ENCODE measurements at regions of chr20 and their contacts with region 1.

Region 1: DNA sequence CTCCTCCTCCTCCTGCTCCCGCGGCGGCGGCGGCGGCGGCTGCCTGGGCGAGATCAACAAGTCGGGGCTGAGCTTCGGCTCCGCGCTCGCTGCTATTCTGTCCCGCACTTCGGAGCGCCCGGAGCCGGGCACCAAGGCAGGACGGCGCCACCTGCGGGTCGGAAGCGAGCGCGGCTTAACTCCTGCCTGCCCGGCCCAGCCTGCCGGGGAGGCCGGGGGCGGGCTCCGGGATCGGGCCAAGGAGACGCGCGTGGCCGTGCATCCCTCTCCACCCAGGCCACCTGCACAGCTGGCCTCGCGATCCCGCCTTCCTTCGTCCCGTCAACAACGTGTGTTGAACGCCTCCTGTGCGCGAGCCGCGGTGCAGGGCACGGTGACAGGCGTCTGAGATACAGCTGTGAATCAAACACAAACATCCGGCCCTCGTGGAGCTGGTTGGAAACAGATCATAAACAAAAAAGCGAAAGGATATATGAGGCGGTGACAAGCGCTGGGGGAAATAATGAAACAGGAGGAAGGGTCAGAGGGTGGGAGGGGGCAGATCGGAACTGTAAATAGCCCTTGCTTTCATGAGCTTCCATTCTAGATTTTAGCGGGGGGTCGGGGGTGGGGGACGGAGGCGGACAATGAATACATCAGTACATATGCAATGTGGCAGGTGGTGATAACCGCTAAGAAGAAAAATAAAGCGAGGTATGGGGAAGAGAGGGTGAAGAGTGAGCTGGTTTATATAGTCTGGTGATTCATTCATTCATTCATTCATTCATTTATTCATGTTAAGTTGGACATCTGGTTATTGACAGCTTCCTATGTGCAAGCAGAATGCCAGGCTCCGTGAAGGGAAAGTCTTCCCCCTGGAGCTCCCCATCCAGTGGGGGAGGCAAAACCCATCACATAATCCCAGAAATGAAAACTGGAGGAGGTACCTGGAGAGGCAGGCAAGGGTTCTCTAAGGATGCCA is 2.0 kb upstream of the KCNB1 start:
- DNase-seq: no peak
- H3K4me3 ChIP-seq: peak overlapping the region; percentile 42
- H3K27me3 ChIP-seq: peaks cover 15% of the 10 kb centered on the region
- CTCF ChIP-seq: peak; percentile 69

Region 2: GRCh38 chr20:49323622-49324238 is 160.7 kb before region 1 on chr20:
- CTCF ChIA-PET with region 1: interaction called, 140 read pairs
- POLR2A ChIA-PET with region 1: no interaction called
- DNase-seq: peak; percentile 33
- H3K4me3 ChIP-seq: no peak overlapping the region
- H3K27me3 ChIP-seq: peaks cover 32% of the 10 kb centered on the region
- CTCF ChIP-seq: peak; percentile 56

Region 3: DNA sequence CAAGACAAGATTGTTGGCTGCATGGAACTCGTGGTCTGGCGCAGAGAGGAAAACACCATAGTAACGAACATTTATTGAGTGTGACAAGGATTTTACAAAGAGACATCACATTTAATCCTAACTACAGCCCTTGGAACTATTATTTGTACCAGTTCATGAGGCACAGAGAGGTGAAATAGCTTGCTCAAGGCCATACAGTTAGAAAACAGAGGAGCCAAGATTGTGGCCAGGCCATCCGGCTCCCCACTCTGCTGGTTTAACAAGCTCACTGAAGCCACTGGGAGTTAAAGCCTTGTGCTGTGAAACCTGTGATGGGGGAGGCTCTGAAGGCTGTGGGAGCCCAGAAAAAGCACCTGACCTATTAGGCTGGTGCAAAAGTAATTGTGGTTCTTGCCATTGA is 131.7 kb before region 1 on chr20:
- CTCF ChIA-PET with region 1: interaction called, 16 read pairs
- POLR2A ChIA-PET with region 1: no interaction called
- DNase-seq: no peak
- H3K4me3 ChIP-seq: no peak overlapping the region
- H3K27me3 ChIP-seq: peaks cover 4% of the 10 kb centered on the region
- CTCF ChIP-seq: no peak

Region 4: GRCh38 chr20:49452011-49452482 is 32.4 kb before region 1 on chr20:
- CTCF ChIA-PET with region 1: interaction called, 4 read pairs
- POLR2A ChIA-PET with region 1: interaction called, 12 read pairs
- DNase-seq: no peak
- H3K4me3 ChIP-seq: no peak overlapping the region
- H3K27me3 ChIP-seq: peaks cover 17% of the 10 kb centered on the region
- CTCF ChIP-seq: no peak

Region 5: DNA sequence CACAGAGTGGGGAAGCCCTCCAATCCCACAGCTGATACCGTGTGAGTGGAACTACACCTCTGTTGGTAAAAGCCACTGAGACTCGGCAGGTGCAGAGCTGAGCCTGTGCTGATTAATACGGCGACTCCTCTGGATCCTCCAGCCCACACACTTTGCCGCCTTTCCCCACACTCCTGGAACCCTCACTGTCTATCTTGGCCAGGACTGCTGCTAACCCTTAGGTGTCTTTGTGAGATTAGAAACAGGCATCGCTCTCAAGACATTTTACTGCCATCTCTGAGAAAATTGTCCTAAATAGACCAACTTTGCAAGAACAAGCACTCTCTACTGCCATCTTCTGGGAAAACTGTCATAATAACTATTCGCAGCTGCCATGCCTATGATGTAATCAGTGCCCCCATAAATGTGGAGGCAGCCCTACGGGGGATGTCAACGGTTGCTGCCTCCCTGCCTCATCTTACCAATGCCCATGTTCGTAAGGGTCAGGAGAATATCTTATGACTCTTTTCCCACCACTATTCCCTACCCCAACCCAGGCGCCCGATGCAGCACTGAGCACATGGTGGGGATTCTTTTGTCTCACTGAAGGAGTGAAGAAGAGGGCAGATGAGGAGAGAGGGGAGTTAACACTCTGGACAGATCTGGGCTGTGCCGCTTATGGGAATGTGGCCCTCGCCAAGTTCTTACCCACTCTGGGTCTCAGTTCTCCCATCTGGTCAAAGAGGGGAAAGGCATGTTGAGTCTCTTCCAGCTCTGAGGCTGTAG is 24.2 kb after region 1 on chr20:
- CTCF ChIA-PET with region 1: interaction called, 68 read pairs
- POLR2A ChIA-PET with region 1: interaction called, 6 read pairs
- DNase-seq: no peak
- H3K4me3 ChIP-seq: no peak overlapping the region
- H3K27me3 ChIP-seq: peaks cover 5% of the 10 kb centered on the region; the same call in 1 of the 2 replicates
- CTCF ChIP-seq: peak; percentile 63

Region 6: GRCh38 chr20:49534255-49534712 is 49.8 kb after region 1 on chr20:
- CTCF ChIA-PET with region 1: interaction called, 16 read pairs
- POLR2A ChIA-PET with region 1: no interaction called
- DNase-seq: no peak
- H3K4me3 ChIP-seq: no peak overlapping the region
- H3K27me3 ChIP-seq: no peaks in the 10 kb centered on the region
- CTCF ChIP-seq: peak; percentile 79